ENCODE measurements at regions of chr1 and their contacts with region 1.

Region 1: GRCh38 chr1:19661721-19662228 is 2.9 kb upstream of the HTR6 start:
- DNase-seq: no peak
- ATAC-seq: no peak
- H3K4me3 ChIP-seq: no peak overlapping the region
- H3K27ac ChIP-seq: no peak overlapping the region
- H3K4me1 ChIP-seq: peaks cover 0 to 17% (median 5%) of the 10 kb centered on the region in 12 donors
- H3K27me3 ChIP-seq: peaks cover 22 to 47% (median 31%) of the 10 kb centered on the region in 9 donors
- CTCF ChIP-seq: peak; percentile 62 to 84 (median 76)
- POLR2A ChIP-seq: no peak

Region 2: DNA sequence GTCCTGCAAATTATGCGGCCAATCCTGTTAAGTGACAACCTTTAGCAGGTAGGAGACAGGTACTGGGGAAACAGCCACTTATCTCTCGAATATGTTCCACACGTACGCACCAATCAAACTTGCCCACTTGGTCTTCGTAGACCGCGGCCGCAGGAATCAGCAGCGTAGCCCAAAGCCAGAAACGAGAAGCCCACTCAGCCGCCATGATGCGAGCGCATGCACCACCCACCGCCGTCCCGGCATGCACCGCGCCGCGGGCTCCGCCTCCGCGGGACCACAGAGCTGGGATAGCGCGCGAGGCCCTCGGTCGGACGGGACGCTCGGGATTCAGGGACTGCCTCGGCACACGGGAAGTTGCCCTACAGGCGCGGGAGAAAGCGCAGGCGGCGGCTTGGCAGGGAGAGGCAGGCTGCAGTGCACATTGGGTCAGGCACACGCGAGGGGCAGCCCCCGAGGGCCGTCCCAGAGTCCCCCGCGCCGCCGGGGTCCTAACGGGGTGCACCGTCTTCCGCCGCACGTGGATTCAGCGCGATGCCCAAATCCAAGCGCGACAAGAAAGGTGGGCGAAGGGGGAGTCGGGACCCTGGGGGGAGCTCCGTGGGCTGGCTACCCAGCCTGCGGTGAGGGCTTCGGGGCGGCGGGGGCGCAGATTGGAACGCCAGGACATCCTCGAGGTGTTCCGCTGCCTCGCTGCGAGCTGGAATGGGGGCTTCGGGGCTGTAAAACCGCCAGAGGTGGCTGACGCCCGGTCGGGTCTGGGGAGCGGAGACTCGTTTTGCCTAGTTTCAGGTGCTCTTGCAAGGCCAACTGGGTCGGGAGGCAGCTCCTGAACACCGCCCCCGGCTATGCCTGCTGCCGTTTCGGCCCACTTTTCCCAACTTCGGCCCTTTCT is 410.2 kb before region 1 on chr1 and contains the starts of genes EMC1 and MRTO4:
- intact Hi-C with region 1: loop called in 6 of 10 experiments (anchors 5 to 10 kb)
- DNase-seq: peak; percentile 84 to 92 (median 90)
- ATAC-seq: peak; percentile 87 to 97 (median 96)
- H3K4me3 ChIP-seq: peak within 1 kb of the TSS; percentile 63 to 95 (median 80)
- H3K27ac ChIP-seq: peak within 1 kb of the TSS; percentile 91 to 98 (median 96)
- H3K4me1 ChIP-seq: peaks cover 3 to 37% (median 25%) of the 10 kb centered on the region in 12 donors
- H3K27me3 ChIP-seq: no peaks in the 10 kb centered on the region
- CTCF ChIP-seq: no peak
- POLR2A ChIP-seq: peak in 1 of 2 donors; percentile 66
- total RNA-seq, gene EMC1: 23.4 to 54.5 (median 32.7) TPM
- total RNA-seq, gene MRTO4: 8.3 to 17.4 (median 13.7) TPM

Region 3: GRCh38 chr1:19341201-19342072 is 320.3 kb before region 1 on chr1:
- intact Hi-C with region 1: loop called in 1 of 10 experiments (anchors 5 kb)
- DNase-seq: peak; percentile 51 to 80 (median 65)
- ATAC-seq: peak in 3 of 4 donors; percentile 42 to 61 (median 52)
- H3K4me3 ChIP-seq: no peak overlapping the region
- H3K27ac ChIP-seq: peak overlapping the region in 6 of 12 donors; percentile 20 to 52 (median 34)
- H3K4me1 ChIP-seq: peaks cover 0 to 27% (median 9%) of the 10 kb centered on the region in 12 donors
- H3K27me3 ChIP-seq: no peaks in the 10 kb centered on the region
- CTCF ChIP-seq: peak; percentile 73 to 95 (median 86)
- POLR2A ChIP-seq: no peak

Region 4: DNA sequence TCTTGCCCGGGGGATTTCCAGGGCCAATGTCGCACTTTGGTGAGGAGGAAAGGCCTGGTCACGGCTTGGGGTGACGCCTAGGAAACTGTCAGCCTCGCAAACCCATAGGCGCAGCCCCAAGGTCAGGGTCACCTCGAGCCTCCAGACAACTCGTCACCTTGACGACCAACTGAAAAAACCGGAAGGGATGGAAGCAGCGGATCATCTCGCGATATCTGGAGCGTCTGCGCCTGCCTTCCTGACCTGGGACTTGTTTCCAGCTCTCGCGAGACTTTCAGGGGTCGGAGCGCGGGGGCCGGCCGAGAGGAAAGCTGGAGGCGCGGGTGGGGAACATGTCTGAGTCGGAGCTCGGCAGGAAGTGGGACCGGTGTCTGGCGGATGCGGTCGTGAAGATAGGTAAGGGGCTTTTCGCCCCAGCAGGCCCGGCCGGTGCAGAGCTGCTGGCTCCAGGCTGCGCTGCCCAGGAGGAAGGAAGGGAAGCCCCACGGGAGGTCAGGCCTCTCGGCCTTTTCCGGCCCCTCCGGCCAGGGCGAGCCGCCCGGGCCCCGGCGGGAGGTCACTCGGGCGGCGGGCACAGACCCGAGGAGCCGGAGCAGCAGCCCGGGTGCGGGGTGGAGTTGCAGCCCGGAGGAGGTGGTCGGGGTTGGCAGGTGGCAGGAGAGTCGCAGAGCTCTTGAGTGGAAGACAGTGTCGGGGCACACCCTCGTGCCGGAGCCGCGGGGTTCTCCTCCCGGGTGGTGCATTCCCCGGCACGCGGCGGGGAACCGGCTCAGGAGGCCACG is 64.9 kb before region 1 on chr1:
- intact Hi-C with region 1: no loop called
- DNase-seq: peak; percentile 97 to 98 (median 98)
- ATAC-seq: peak; percentile 90 to 95 (median 94)
- H3K4me3 ChIP-seq: peak overlapping the region; percentile 63 to 95 (median 88)
- H3K27ac ChIP-seq: peak overlapping the region; percentile 91 to 98 (median 96)
- H3K4me1 ChIP-seq: peaks cover 0 to 51% (median 35%) of the 10 kb centered on the region in 12 donors
- H3K27me3 ChIP-seq: no peaks in the 10 kb centered on the region
- CTCF ChIP-seq: no peak
- POLR2A ChIP-seq: peak in 1 of 2 donors; percentile 74

Region 5: GRCh38 chr1:19704247-19705113 is 42.7 kb after region 1 on chr1:
- intact Hi-C with region 1: loop called in 9 of 10 experiments (anchors 1 to 5 kb)
- DNase-seq: peak; percentile 64 to 80 (median 70)
- ATAC-seq: peak; percentile 70 to 93 (median 90)
- H3K4me3 ChIP-seq: no peak overlapping the region
- H3K27ac ChIP-seq: no peak overlapping the region
- H3K4me1 ChIP-seq: peaks cover 0 to 9% (median 4%) of the 10 kb centered on the region in 12 donors
- H3K27me3 ChIP-seq: no peaks in the 10 kb centered on the region
- CTCF ChIP-seq: peak; percentile 85 to 96 (median 92)
- POLR2A ChIP-seq: no peak